Activated T-helper 2 cell treated with anti-CD3 and anti-CD28 coated beads, Interferon-gamma antibody, Interleukin-2, Interleukin-4, amounts not matched to agents 10 μg/mL and 5 μg/mL and 100 μg/mL, durations not matched to agents 14 hours and 24 hours and 36 hours (primary cell): ENCODE measurements at regions of chr3 and their contacts with region 1.

Region 1: DNA sequence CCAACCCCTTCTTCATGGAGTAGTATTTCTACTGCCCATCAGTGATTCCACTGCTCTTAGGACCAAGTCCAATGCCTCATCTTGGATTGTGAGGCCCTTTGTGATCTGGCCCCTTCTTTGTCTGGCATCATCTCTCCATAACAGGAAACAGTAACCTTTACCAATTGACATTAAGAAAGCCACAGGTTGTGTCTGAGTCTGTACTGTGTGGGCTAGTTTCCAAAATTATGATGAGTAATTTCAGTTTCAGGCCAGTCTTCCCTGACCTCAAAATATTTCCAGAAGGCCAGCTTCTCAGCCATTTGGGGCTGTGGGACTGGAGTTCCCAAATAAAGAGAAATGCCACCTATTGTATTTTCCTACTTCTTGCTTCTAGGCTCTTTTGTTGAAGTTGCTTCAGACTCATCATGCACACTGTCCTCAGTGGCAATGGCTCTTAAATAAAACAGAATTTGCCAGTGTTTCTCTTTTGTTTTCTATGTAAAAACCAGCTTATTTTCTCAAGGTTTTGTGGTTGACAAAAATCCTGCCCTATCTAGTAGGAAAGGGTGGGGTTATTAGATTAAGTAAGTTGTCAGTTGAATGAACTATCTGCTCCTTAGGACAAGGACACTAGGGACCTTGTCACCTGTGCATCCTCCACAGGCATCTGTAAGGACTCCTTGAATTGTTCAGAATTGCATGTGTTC is 47.0 kb upstream of the ACKR4 start:
- DNase-seq: no peak
- H3K4me3 Mint-ChIP-seq: peak overlapping the region; percentile 69
- H3K27ac Mint-ChIP-seq: peak overlapping the region; percentile 99
- H3K4me1 Mint-ChIP-seq: peaks cover 50% of the 10 kb centered on the region
- H3K27me3 Mint-ChIP-seq: no peaks in the 10 kb centered on the region

Region 2: DNA sequence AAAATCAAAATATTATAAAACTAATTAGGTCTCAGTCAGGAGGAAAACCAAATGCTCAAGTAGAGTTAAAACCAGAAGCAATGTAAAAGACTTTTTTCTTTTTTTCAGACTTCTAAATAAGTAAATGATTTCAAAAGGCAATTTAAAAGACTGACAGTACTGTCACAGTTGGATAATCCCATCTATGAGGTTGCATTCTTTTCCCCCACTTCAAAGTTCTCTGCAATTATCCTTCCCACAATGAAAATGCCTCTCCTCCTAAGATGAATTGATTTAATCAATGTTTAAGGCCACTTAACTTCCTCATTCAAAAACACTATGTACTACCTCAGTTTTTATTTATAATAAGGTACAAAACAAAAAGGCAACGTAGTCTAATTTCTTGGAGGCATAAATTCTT is 1055.3 kb before region 1 on chr3:
- intact Hi-C with region 1: loop called (anchors 10 kb)
- DNase-seq: no peak
- H3K4me3 Mint-ChIP-seq: no peak overlapping the region
- H3K27ac Mint-ChIP-seq: no peak overlapping the region
- H3K4me1 Mint-ChIP-seq: peaks cover 23% of the 10 kb centered on the region
- H3K27me3 Mint-ChIP-seq: no peaks in the 10 kb centered on the region

Region 3: DNA sequence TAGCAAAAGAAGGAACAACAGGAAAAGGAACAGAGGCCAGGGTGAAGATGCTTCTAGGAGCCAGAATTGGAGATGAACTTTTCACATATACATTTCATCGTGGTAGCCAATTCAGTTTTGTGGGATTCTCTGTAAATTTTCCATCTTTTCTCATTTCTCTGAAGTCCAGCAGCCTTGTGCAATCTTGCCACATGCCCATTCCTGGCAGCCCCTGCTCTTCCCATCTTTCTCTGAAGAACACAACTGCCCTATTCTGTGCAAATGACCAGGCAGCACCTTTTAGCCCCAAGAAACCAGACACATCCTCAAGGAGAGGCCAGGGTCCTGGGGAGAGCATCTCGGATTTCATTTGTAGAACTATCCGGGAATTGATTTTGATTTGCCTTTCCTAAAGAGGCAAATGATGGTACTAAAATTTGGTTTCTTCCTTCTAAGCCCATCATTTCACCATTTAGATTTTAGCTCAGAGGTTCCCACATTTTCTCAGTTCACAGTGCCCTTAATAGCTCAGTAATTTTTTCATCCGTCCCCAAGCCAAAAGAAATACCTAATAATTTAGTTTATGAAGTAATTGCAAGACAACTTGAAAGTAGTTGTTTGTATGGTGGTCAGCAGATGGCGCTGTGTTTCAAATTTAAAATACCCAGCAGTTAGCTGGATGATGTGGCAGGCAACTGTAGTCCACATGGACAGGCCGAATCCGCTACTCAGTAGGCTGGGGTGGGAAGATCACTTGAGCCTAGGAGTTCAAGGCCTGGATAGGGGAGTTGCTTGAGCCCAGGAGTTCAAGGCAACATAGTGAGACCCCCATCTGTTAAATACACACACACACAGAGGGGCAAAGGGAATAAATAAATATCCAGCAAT is 14.2 kb before region 1 on chr3:
- intact Hi-C with region 1: loop called (anchors 2 kb)
- DNase-seq: peak; percentile 24
- H3K4me3 Mint-ChIP-seq: no peak overlapping the region
- H3K27ac Mint-ChIP-seq: peak overlapping the region; percentile 72
- H3K4me1 Mint-ChIP-seq: peaks cover 22% of the 10 kb centered on the region
- H3K27me3 Mint-ChIP-seq: no peaks in the 10 kb centered on the region

Region 4: GRCh38 chr3:132569153-132569552 is 19.1 kb after region 1 on chr3:
- intact Hi-C with region 1: loop called (anchors 1 kb)
- DNase-seq: no peak
- H3K4me3 Mint-ChIP-seq: peak overlapping the region; percentile 1
- H3K27ac Mint-ChIP-seq: peak overlapping the region; percentile 90
- H3K4me1 Mint-ChIP-seq: peaks cover 24% of the 10 kb centered on the region
- H3K27me3 Mint-ChIP-seq: no peaks in the 10 kb centered on the region